A549 (cell line): ENCODE measurements at regions of chr5 and their contacts with region 1.

Region 1: GRCh38 chr5:65925601-65926275 is 637 bp upstream of the ERBIN start:
- DNase-seq: peak; percentile 69 to 89
- ATAC-seq: peak; percentile 83 to 85
- H3K4me3 ChIP-seq: peak overlapping the region; percentile 78
- H3K27ac ChIP-seq: peak overlapping the region; percentile 99
- H3K4me1 ChIP-seq: peaks cover 44% of the 10 kb centered on the region
- CTCF ChIP-seq: peak; percentile 56
- EP300 ChIP-seq: no peak
- POLR2A ChIP-seq: peak; percentile 90
- RAD21 ChIP-seq: peak in 1 of 2 experiments; percentile 21; a peak in 1 of 5 replicates

Region 2: GRCh38 chr5:65871182-65871581 is 54.6 kb before region 1 on chr5:
- CTCF ChIA-PET with region 1: no interaction called
- POLR2A ChIA-PET with region 1: no interaction called
- DNase-seq: peak in 1 of 2 experiments; percentile 41
- ATAC-seq: peak in 1 of 2 experiments; percentile 57; a peak in 3 of 6 replicates
- H3K4me3 ChIP-seq: no peak overlapping the region
- H3K27ac ChIP-seq: peak overlapping the region in 1 of 2 experiments; percentile 70; a peak in 1 of 6 replicates
- H3K4me1 ChIP-seq: peaks cover 16% of the 10 kb centered on the region
- CTCF ChIP-seq: no peak
- EP300 ChIP-seq: no peak
- POLR2A ChIP-seq: no peak
- RAD21 ChIP-seq: no peak

Region 3: GRCh38 chr5:66010476-66010875 is 84.7 kb after region 1 on chr5:
- CTCF ChIA-PET with region 1: no interaction called
- POLR2A ChIA-PET with region 1: no interaction called
- DNase-seq: no peak
- ATAC-seq: no peak
- H3K4me3 ChIP-seq: no peak overlapping the region
- H3K27ac ChIP-seq: no peak overlapping the region
- H3K4me1 ChIP-seq: peaks cover 46% of the 10 kb centered on the region
- CTCF ChIP-seq: no peak
- EP300 ChIP-seq: no peak
- POLR2A ChIP-seq: no peak
- RAD21 ChIP-seq: no peak

Region 4: DNA sequence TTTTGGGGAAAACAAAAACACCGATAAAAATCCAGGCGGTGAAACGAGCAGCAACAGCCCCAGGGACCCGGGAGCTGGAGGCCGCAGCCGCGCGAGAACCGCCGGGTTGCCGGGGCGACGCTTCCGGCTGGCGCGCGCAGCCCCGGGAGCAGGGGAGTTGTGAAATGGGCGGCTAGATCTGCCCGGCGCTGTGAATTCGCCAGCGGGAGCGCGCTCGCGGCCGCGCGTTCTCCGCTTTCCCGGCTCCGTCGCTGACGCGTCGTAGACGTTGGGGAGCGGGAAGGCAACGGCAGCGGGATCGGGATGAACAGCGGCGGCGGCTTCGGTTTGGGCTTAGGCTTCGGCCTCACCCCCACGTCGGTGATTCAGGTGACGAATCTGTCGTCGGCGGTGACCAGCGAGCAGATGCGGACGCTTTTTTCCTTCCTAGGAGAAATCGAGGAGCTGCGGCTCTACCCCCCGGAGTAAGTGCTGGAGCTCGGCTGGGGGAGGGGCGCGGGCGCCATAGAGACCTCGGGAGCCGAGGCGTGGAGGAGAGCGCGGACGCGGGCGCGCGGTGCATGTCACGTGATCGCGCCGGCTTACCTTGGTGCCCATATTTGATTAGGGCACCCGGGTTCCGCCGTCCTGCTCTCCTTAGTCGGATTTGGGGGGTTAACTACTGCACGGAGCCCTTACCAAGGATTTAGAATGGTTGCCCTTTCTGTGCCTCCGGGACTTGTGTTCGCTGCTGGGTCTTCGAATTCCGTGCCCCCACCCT is 218.5 kb after region 1 on chr5 and contains the start of gene SREK1:
- CTCF ChIA-PET with region 1: no interaction called
- POLR2A ChIA-PET with region 1: interaction called, 13 read pairs
- DNase-seq: peak; percentile 93 to 96
- ATAC-seq: peak; percentile 95 to 96
- H3K4me3 ChIP-seq: peak within 1 kb of the TSS; percentile 79
- H3K27ac ChIP-seq: peak within 1 kb of the TSS; percentile 99
- H3K4me1 ChIP-seq: peaks cover 24% of the 10 kb centered on the region
- CTCF ChIP-seq: no peak
- EP300 ChIP-seq: no peak
- POLR2A ChIP-seq: peak; percentile 80
- RAD21 ChIP-seq: no peak
- polyA plus RNA-seq, gene SREK1: 67.7 and 87.1 TPM in 2 replicates